MCF 10A (cell line): ENCODE measurements at regions of chrX and their contacts with region 1.

Region 1: GRCh38 chrX:106791495-106791894 is 11.0 kb upstream of the TBC1D8B start:
- DNase-seq: peak; percentile 32
- H3K4me3 Mint-ChIP-seq: no peak overlapping the region
- H3K27ac Mint-ChIP-seq: no peak overlapping the region
- H3K4me1 Mint-ChIP-seq: no peaks in the 10 kb centered on the region
- H3K27me3 Mint-ChIP-seq: peaks cover 54% of the 10 kb centered on the region
- CTCF ChIP-seq: peak; percentile 49

Region 2: DNA sequence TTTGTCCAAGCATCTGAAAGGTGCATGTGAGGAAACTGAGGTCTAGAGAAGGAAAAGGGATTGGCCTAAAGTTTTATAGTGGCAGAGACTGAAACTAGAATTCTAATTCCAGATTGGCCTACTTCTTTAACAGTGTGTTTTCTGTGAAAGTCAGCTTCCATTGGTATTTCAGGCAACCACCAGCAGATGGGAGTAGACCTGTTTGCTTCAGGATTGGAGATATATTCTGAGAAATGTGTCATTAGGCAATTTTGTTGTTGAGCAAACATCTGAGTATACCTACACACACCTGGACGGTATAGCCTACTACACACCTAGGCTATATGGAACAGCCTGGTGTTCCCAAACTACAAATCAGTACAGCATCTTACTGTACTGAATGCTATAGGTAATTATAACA is 387.0 kb before region 1 on chrX:
- CTCF ChIA-PET with region 1: interaction called, 3 read pairs
- POLR2A ChIA-PET with region 1: no interaction called
- intact Hi-C with region 1: loop called (anchors 5 kb)
- DNase-seq: peak; percentile 40
- H3K4me3 Mint-ChIP-seq: no peak overlapping the region
- H3K27ac Mint-ChIP-seq: no peak overlapping the region
- H3K4me1 Mint-ChIP-seq: no peaks in the 10 kb centered on the region
- H3K27me3 Mint-ChIP-seq: peaks cover 55% of the 10 kb centered on the region
- CTCF ChIP-seq: peak; percentile 39